ENCODE measurements at regions of chr12 and their contacts with region 1.

Region 1: GRCh38 chr12:1117970-1118563 is 127.0 kb downstream of the ERC1 start:
- DNase-seq: peak; percentile 13 to 80
- ATAC-seq: peak; percentile 64 to 75; a peak in 4 of 6 replicates
- H3K4me3 ChIP-seq: no peak overlapping the region
- H3K27ac ChIP-seq: no peak overlapping the region
- H3K4me1 ChIP-seq: no peaks in the 10 kb centered on the region
- CTCF ChIP-seq: peak; percentile 94
- EP300 ChIP-seq: no peak
- POLR2A ChIP-seq: no peak
- RAD21 ChIP-seq: peak; percentile 95 to 96

Region 2: GRCh38 chr12:726281-727140 is 391.6 kb before region 1 on chr12:
- CTCF ChIA-PET with region 1: no interaction called
- POLR2A ChIA-PET with region 1: no interaction called
- DNase-seq: peak; percentile 21 to 54
- ATAC-seq: peak; percentile 65 to 70; a peak in 5 of 6 replicates
- H3K4me3 ChIP-seq: no peak overlapping the region
- H3K27ac ChIP-seq: peak overlapping the region; percentile 36 to 61
- H3K4me1 ChIP-seq: peaks cover 32% of the 10 kb centered on the region
- CTCF ChIP-seq: no peak
- EP300 ChIP-seq: no peak
- POLR2A ChIP-seq: no peak
- RAD21 ChIP-seq: no peak

Region 3: DNA sequence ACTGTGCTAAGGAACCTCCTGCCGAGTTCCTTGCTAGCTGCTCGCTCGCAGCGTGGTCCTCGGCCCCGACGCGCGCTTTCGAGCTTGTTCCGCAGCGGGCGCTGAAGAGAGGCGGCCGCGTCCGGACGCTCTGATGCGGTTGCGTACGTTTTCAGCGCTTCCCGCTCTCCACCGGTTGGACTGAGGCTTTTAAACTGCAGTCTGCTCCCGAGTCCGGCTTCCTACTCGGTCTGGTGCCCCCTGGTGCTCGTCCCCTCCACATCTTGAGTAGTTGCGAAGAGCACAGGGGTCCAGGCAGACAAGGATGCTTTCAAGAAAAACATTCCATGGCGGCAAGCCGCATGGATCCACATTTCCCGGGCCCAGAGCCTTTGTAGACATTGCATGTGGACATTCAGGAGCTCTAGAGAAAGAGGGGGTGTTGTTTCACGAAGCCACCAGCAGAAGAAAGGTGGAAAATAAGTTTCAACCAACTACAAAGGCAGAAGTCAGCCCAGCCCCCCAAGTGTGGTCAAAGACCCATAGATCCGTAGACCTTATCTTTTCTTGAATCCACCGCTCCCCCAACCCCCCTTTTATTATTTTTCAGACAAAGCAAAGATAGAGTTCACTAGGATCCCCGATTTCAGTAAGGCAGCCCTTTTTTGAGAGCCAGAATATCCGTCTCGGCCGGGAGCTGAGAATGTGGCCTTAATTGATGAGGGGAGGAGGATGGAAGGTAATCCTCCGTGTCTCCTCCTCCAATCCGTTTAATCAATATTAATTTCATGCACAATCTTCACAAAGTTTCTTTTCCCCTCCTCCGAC is 366.7 kb before region 1 on chr12:
- CTCF ChIA-PET with region 1: no interaction called
- POLR2A ChIA-PET with region 1: no interaction called
- DNase-seq: peak; percentile 94 to 99
- ATAC-seq: peak; percentile 70 to 85
- H3K4me3 ChIP-seq: peak overlapping the region; percentile 49
- H3K27ac ChIP-seq: peak overlapping the region; percentile 79 to 90
- H3K4me1 ChIP-seq: peaks cover 19% of the 10 kb centered on the region
- CTCF ChIP-seq: peak; percentile 80
- EP300 ChIP-seq: no peak
- POLR2A ChIP-seq: peak; percentile 73
- RAD21 ChIP-seq: peak; percentile 86 to 89

Region 4: DNA sequence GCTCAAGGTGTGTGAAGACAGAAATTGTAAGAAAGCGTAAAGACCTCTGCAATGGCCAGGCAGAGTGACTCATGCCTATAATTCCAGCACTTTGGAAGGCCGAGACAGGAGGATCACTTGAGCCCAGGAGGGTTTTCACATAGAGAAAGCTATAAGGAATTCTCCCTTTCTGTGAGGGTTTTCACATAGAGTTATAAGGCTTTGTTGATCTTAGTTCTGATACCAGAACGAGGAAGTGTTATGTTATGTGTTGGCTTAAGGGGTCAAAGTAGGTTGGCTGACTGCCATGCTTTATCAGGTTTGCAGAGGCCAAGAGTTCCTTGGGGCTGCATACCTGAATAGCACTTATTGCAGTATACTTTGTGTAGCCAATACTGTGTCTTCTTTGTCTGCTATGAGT is 12.1 kb after region 1 on chr12:
- CTCF ChIA-PET with region 1: interaction called, 34 read pairs
- POLR2A ChIA-PET with region 1: no interaction called
- DNase-seq: peak in 1 of 2 experiments; percentile 53
- ATAC-seq: peak in 1 of 2 experiments; percentile 57; a peak in 4 of 6 replicates
- H3K4me3 ChIP-seq: no peak overlapping the region
- H3K27ac ChIP-seq: no peak overlapping the region
- H3K4me1 ChIP-seq: peaks cover 7% of the 10 kb centered on the region; the same call in 1 of the 3 replicates
- CTCF ChIP-seq: no peak
- EP300 ChIP-seq: no peak
- POLR2A ChIP-seq: no peak
- RAD21 ChIP-seq: no peak

Region 5: DNA sequence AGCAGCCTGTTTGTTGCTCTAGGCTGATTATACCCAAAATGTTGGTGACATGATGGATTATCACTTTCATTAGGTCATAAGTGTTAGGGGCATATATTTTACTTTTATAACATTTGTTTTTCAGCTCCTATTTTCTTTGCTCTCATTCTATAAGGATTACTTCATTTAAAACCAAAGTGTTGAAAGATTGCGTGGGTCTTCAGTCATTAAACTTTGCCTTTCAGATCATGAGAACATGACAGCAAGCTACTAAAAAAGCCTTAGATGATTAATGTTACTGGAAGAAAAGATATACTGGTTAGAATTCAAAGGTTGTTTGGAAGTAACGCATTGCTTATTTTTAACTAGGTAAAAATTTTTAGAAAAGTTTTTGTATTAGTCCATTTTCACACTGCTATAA is 29.8 kb after region 1 on chr12:
- CTCF ChIA-PET with region 1: interaction called, 11 read pairs
- POLR2A ChIA-PET with region 1: no interaction called
- DNase-seq: no peak
- ATAC-seq: no peak
- H3K4me3 ChIP-seq: no peak overlapping the region
- H3K27ac ChIP-seq: no peak overlapping the region
- H3K4me1 ChIP-seq: no peaks in the 10 kb centered on the region
- CTCF ChIP-seq: no peak
- EP300 ChIP-seq: no peak
- POLR2A ChIP-seq: no peak
- RAD21 ChIP-seq: no peak

Region 6: DNA sequence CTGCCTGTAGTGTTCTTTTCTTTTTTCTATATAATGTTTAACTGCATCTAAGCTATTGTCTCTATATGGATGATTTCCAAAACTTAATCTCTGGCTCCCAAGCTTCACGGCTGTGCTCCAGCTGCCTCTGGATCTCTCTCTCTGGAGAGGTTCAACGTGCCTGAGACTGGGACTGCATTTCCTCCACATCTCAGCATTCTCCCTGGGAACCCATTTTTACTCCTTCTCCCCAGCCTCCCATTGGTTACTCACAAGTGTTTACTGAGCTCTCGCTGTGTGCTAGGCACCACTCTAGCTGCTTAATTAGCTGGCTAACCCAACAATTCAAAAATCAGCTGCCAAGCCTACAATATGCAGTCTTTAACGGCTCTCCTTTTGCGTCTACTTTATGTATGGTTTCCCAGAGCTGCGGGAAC is 441.6 kb after region 1 on chr12:
- CTCF ChIA-PET with region 1: interaction called, 17 read pairs
- POLR2A ChIA-PET with region 1: no interaction called
- DNase-seq: no peak
- ATAC-seq: no peak
- H3K4me3 ChIP-seq: no peak overlapping the region
- H3K27ac ChIP-seq: no peak overlapping the region
- H3K4me1 ChIP-seq: no peaks in the 10 kb centered on the region
- CTCF ChIP-seq: no peak
- EP300 ChIP-seq: no peak
- POLR2A ChIP-seq: no peak
- RAD21 ChIP-seq: no peak

Region 7: DNA sequence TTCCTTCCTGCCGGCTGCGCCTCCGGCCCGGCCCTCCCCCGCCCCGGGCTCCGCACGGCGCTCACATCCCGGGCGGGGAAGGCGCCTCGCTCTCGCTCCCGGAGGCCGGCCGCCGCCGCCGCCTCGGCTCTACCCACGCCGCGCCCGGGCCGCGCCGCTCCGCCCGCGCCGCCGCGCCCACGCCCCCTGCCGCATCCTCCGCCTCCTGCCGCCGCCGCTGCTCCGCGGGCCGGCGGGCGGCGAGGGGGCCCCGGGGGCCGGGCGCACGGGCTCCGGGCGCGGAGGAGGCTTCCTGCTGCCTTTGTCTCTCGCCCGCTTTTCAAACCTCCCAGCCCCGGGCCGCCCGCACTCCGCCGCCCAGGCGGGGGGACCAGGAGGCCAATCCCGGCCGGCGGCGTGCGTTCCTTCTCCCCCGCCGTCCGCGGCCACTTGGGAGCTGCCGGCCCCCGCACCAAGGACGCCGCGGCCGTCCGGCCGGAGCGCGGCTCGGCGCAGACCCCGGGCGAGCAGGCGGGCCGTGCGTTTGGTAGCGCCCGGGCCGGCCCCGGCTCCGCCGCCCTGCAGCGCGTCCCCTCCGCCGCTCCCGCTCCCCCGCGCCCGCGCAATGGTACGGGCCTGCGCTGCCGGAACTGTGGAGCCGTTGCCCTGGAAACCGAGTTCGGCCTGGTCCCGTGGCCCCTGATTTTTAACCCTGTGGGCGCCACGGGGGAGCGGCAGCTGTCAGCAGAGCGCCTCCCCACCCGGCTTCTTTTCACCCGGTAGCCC is 476.4 kb after region 1 on chr12 and contains the start of gene FBXL14:
- CTCF ChIA-PET with region 1: interaction called, 73 read pairs
- POLR2A ChIA-PET with region 1: no interaction called
- DNase-seq: peak; percentile 76 to 87
- ATAC-seq: peak; percentile 79 to 84
- H3K4me3 ChIP-seq: peak within 1 kb of the TSS; percentile 68
- H3K27ac ChIP-seq: peak within 1 kb of the TSS; percentile 91 to 99
- H3K4me1 ChIP-seq: peaks cover 38% of the 10 kb centered on the region
- CTCF ChIP-seq: no peak
- EP300 ChIP-seq: no peak
- POLR2A ChIP-seq: peak; percentile 65
- RAD21 ChIP-seq: no peak
- polyA plus RNA-seq, gene FBXL14: 6.7 and 8.2 TPM in 2 replicates

Region 8: DNA sequence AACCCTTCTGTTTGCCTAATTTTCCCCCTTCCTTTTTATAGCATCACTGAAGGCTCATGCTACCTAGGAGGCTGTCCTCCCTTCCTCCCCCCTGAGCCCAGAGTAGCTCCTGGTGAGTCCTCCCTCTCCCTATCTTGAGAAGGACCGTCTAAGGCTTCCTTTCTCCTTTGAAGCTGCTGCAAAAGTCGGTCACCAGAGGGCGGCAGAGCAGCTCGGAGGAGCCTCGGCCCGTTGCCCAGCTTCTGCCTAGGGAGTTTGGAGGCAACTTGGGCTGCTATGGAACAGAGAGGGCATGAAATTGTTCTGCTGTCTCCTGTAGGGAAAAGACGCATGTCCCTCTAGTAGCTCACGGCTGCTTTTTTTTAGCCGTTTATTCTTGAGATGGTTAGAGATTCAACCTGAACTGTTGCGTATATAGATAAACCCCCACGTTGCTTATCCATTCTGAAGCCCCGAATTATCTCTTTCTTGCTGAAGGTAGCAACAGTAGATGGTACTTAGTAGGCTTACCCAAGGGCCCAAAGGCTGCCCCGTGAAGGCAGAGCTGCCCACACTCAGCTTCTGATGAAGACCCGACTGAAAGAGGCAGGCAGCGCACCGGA is 516.6 kb after region 1 on chr12:
- CTCF ChIA-PET with region 1: interaction called, 12 read pairs
- POLR2A ChIA-PET with region 1: no interaction called
- DNase-seq: peak; percentile 76 to 82
- ATAC-seq: peak; percentile 74 to 87
- H3K4me3 ChIP-seq: no peak overlapping the region
- H3K27ac ChIP-seq: no peak overlapping the region
- H3K4me1 ChIP-seq: peaks cover 3% of the 10 kb centered on the region; the same call in 1 of the 3 replicates
- CTCF ChIP-seq: peak; percentile 76
- EP300 ChIP-seq: no peak
- POLR2A ChIP-seq: no peak
- RAD21 ChIP-seq: peak; percentile 73 to 80

Measured in A549 (cell line).